Activated CD4-positive, alpha-beta memory T cell treated with anti-CD3 and anti-CD28 coated beads for 36 hours (primary cell): ENCODE measurements at regions of chr17 and their contacts with region 1.

Region 1: DNA sequence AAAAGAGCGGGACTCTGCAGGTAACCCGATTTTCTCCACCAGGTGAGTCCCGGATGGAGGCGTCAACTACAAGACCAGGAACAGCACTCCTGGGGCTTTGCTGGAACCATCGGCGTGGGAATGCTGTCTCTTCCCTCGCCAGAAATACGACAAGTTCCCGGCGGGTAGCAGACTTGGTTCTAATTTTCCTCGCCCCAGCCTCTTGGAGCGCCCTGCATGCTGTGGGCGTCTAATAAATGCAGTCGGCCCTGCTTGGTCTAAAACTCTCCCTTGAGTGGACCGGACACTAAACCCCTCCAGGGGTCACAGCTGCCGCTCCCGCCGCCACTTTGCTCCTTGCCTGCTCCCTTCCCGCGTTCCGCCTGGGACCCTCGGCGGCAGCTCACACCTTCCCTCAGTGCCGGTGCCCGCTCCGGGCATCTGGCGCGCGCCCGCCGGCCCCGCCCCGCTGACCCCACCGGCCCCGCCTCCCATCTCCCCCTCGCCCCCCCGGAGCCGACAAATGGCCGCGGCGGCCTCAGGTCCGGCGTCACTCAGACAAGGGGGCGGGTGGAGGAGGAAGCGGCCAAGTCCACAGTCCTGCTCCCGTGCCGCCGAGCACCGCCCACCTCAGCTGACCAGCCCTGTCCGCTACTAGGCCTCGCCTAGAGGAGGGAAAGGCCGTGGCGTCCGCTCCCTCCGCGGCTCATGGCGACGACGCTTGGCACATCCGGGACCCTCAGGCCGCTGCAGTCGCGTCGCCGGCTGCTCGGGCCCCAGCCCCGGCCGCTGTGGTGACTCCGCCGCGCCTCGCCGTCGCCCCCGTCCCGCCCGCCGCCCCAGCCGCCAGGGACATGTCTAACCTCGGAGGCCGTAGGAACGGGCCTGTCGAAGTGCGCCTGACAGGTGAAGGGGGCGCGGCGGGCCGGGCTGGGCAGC is 65.8 kb downstream of the KPNA2 start:
- DNase-seq: peak; percentile 77
- H3K4me3 Mint-ChIP-seq: peak overlapping the region; percentile 90
- H3K27ac Mint-ChIP-seq: peak overlapping the region; percentile 76
- H3K4me1 Mint-ChIP-seq: peaks cover 36% of the 10 kb centered on the region
- H3K27me3 Mint-ChIP-seq: no peaks in the 10 kb centered on the region

Region 2: GRCh38 chr17:68061504-68062313 is 39.6 kb before region 1 on chr17:
- CTCF ChIA-PET with region 1: no interaction called
- POLR2A ChIA-PET with region 1: no interaction called
- intact Hi-C with region 1: no loop called
- DNase-seq: no peak
- H3K4me3 Mint-ChIP-seq: no peak overlapping the region
- H3K27ac Mint-ChIP-seq: no peak overlapping the region
- H3K4me1 Mint-ChIP-seq: peaks cover 23% of the 10 kb centered on the region
- H3K27me3 Mint-ChIP-seq: no peaks in the 10 kb centered on the region

Region 3: DNA sequence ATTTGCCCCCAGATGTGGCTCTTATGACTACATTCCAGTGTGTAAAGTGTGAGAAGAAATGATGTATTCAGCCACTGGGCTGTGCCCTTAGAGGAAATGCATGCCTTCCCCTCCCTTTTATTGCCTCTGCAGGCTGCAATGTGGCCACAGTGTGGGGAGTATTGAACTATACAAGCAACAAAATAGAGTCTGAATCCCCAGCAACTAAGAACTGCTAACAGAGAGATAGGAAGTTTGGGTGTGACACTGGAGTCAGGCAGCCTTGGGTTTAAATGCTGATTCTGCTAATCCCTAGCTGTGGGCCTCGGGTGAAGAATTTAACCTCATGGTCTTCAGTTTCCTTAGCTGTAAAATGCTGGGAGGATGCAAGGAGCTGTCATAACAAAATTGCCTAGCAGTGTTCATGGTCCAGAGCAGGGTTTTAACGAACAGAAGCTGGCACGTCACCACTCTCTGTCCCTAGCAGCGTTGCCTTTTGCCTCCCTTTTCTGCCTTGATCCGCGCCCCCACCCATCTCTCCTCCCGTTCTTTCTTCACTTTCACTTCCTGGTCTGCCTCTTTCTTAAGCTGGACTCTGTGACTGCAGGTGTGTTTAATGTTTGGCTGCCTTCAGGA is 15.5 kb before region 1 on chr17:
- CTCF ChIA-PET with region 1: no interaction called
- POLR2A ChIA-PET with region 1: no interaction called
- intact Hi-C with region 1: loop called (anchors 2 kb)
- DNase-seq: peak; percentile 22
- H3K4me3 Mint-ChIP-seq: no peak overlapping the region
- H3K27ac Mint-ChIP-seq: no peak overlapping the region
- H3K4me1 Mint-ChIP-seq: peaks cover 30% of the 10 kb centered on the region
- H3K27me3 Mint-ChIP-seq: no peaks in the 10 kb centered on the region